Cardiac septum (tissue), 1 donor: ENCODE measurements at regions of chr1 and their contacts with region 1.

Region 1: DNA sequence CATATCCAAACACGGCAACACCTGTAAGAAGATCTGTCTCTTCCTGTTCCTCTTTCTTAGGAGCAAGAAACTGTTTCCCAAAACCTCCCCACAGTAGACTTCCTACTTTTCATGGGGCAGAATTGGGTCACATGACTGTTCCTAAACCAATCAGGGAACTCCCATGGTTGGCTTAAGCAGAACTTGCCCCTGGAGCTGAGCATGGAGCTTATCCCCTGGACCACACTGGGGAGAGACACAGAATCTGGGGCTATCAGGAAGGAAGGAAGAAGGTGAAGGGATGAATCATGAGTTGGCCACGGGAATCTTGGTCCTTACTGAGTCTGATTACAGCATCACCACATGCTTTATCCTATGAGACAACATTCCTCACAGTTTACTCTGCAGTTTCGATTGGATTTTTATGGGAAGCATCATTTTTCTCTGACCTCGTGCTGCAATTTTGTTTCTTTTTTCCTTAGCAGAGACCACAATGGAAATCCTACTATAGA is 81.8 kb downstream of the CDC7 start:
- DNase-seq: no peak

Region 2: DNA sequence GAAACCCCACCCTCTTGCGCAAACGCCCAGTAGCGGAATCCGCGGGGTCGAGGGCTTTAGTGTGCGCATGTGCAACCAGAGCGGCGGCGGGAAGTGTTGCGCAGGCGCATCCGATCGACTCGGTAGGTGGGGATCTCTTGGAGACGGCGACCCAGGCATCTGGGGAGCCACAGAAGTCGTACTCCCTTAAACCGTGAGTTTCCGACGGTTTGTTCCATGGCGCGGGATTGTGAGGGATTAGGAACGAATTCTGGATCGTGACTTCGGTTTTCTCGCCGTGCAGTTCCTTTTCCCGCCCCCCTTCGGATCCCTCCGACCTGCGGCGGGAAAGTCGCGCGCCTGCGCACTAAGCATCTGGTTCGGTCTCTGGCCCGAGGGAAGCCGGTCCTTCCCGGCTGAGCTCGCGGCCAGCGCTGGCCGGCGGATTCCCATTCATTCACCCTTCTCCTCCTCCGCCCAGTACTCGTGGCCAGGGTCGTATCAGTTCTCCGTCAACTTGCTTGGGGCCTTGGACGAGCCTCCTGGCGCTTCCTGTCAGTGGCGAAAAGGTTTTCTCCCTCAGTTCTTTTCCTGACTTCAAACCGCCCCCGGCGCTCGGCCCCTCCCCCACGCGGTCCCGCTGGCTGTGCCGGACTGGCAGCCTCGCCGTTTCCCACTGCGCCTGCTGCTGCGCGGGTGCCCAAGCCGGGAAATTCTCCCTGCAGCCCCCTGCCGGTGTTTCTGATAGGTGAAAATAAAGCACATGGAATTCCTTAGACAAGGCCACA is 81.5 kb before region 1 on chr1 and contains the start of gene CDC7:
- intact Hi-C with region 1: no loop called
- DNase-seq: peak; percentile 95
- total RNA-seq, gene CDC7: 1.6 TPM

Region 3: DNA sequence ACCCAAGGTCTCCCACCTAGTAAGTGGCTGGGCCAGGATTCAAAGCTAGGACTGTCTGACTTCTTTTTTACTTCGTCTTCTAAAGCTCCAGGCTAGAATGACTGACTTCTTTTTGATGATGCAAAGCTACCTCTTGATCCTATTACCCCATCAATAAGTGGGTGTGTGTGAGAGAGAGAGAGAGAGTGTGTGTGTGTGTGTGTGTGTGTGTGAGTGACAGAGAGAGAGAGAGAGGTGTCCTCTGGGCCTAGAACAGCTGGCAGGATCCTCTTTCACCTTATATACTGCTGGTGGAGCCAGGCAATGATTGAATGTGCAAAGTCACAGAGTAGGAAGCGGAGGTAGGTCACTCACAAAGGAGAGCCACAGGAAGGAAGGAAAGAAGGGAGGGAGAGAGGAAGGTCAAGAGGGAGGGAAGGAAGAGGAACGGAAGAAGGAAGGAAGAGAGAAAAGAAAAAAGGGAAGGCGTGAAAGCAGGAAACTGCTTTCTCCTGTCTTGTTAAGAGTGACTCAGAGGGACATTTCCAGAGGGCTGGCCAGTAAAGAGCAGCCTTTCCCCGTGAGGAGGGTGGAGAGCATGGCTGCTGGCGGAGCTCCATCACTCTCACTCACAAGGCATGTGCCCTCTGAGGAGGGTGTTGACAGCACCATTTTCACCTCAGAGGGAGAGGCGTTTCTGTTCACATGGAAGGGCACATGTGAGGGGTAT is 12.9 kb before region 1 on chr1:
- intact Hi-C with region 1: loop called (anchors 1 kb)
- DNase-seq: peak; percentile 90

Region 4: GRCh38 chr1:91601554-91602376 is 19.3 kb after region 1 on chr1:
- intact Hi-C with region 1: loop called (anchors 1 kb)
- DNase-seq: peak; percentile 81

Region 5: GRCh38 chr1:91707114-91707889 is 124.8 kb after region 1 on chr1:
- intact Hi-C with region 1: loop called (anchors 5 kb)
- DNase-seq: no peak